Kidney (tissue), 22 donors: ENCODE measurements at regions of chr1 and their contacts with region 1.

Region 1: DNA sequence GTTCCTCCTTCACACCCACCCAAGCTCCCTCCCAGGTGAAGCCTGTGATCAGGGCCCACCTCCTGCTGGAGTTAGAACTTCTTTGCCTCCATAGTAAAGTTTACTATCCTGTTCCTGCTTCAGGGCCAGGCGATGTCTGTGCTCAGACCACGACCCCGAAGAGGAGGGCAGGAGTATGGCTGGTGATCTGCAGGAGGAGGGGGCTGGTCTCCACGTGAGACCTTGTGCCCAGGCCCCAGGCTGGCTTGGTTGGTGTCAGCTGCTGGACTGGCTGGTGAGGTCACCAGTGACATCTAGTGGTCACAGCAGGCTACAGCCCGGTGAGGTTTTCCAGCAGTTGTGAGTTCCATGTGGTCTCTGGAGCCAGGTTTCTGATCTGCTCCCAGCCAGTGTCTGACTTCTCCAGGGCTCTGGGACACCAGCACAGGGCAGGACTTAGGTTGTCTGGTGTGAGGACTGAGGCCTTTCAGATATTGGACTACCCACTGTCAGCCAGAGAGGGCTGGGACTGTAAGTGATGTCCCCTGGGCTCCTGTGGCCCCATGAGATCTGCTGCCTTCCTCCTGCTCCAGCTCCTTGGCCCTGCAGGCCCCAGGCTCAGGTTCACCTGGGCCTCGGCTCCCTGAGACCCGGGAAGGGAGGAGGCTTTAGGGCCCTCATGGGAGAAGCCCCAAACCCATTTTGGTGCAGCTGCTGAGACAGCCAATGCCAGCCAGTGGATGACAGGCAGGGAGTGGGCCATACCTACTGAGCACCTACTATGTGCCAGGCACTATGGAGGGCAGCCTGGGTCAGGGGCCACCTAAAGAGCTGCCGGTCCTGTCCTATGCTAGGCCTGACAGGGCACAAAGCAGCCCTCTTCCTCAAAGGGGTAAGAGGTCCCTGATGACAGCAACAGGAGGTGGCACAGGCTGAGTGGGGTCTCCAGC is 6.0 kb upstream of the UBL4B start:
- DNase-seq: peak; percentile 79 to 85 (median 83)
- H3K4me3 ChIP-seq: no peak overlapping the region
- H3K27ac ChIP-seq: no peak overlapping the region
- H3K4me1 ChIP-seq: no peaks in the 10 kb centered on the region
- H3K27me3 ChIP-seq: peaks cover 3% of the 10 kb centered on the region
- CTCF ChIP-seq: peak; percentile 93

Region 2: GRCh38 chr1:110053557-110054428 is 52.5 kb before region 1 on chr1:
- intact Hi-C with region 1: loop called (anchors 10 kb)
- DNase-seq: peak in 3 of 5 donors; percentile 54 to 72 (median 63)
- H3K4me3 ChIP-seq: no peak overlapping the region
- H3K27ac ChIP-seq: no peak overlapping the region
- H3K4me1 ChIP-seq: peaks cover 0 to 7% (median 0%) of the 10 kb centered on the region in 3 donors
- H3K27me3 ChIP-seq: no peaks in the 10 kb centered on the region
- CTCF ChIP-seq: peak; percentile 88

Region 3: DNA sequence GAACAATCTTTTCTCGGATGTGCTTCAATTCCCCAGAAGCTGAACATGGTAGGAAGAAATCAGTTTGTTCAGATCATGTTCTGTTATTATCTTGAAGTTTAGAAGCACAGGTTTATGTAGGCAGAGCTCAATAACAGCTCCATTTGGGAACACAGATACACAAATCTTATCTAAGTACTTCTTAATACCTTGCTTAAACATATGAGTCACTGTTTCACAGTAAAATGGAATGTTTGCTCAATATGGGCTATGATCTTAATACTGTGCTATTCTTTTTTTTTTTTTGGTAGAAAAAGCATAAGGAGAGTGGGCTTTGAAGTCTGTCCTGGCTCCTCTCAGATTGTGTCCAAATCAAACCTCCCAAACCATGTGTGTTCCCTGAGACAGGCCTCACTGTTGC is 358.1 kb after region 1 on chr1:
- intact Hi-C with region 1: no loop called
- DNase-seq: no peak
- H3K4me3 ChIP-seq: no peak overlapping the region
- H3K27ac ChIP-seq: no peak overlapping the region
- H3K4me1 ChIP-seq: no peaks in the 10 kb centered on the region
- H3K27me3 ChIP-seq: no peaks in the 10 kb centered on the region
- CTCF ChIP-seq: no peak